ENCODE measurements at regions of chr1 and their contacts with region 1.

Region 1: DNA sequence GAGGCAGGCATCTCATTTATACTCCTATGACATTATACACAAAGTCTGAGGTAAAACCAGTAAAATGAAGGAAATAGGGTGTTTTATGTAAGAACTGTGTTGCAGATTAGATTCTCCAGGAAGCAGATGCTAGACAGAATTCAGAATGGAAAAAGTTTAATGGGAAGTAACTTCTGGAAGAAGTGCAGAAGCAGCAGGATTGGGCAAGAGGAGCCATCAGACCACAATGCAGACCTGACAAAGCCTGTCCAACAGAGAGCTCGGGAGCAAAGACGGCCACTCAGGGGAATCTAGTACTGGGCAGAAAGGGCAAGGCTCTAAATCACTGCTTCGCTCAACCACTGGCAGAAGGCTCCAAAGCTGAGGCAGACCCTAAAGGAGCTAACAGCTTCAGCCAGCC is 33.7 kb downstream of the FBXO42 start:
- DNase-seq: no peak
- H3K4me3 ChIP-seq: no peak overlapping the region
- H3K27ac ChIP-seq: no peak overlapping the region
- H3K4me1 ChIP-seq: peaks cover 5% of the 10 kb centered on the region
- CTCF ChIP-seq: no peak

Region 2: DNA sequence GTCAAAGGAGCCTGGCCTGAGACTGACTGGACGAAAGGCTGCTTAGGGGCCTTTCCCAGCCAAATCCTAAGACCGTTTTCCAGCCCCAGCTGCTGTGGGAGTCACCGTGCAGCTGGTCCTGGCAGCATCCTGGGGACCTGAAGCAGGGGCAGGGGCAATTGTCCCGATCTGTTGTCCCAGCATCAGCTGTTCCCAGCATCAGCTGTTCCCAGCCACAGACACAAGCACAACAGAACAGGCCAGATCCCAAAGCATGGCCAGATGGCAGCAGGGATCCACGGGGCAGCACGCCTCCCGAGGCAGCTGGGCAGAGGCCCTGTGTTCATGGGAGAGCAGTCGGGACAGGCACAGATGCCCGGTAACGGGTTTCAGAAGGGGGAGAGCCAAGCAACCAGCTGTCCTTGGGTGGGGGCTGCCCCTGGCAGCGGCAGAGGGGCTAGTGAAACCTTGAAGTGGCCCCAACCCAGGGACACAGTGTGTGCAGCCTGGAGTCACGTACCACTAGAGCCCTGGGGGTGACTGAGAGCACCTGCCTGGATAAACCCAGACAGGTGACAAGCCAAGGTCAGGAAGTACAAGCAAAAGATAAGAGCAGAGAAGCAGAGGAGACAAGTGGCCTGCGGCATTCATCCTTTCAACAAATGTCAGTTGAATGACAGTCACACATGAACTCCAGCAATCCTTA is 829.4 kb before region 1 on chr1:
- CTCF ChIA-PET with region 1: no interaction called
- POLR2A ChIA-PET with region 1: no interaction called
- intact Hi-C with region 1: no loop called
- DNase-seq: no peak
- H3K4me3 ChIP-seq: no peak overlapping the region
- H3K27ac ChIP-seq: no peak overlapping the region
- H3K4me1 ChIP-seq: no peaks in the 10 kb centered on the region
- CTCF ChIP-seq: no peak

Region 3: GRCh38 chr1:16249596-16250241 is 68.8 kb before region 1 on chr1:
- CTCF ChIA-PET with region 1: no interaction called
- POLR2A ChIA-PET with region 1: no interaction called
- intact Hi-C with region 1: loop called (anchors 10 kb)
- DNase-seq: no peak
- H3K4me3 ChIP-seq: no peak overlapping the region
- H3K27ac ChIP-seq: peak overlapping the region; percentile 47
- H3K4me1 ChIP-seq: peaks cover 20% of the 10 kb centered on the region
- CTCF ChIP-seq: no peak

Region 4: GRCh38 chr1:16300436-16300835 is 18.1 kb before region 1 on chr1:
- CTCF ChIA-PET with region 1: no interaction called
- POLR2A ChIA-PET with region 1: no interaction called
- intact Hi-C with region 1: no loop called
- DNase-seq: no peak
- H3K4me3 ChIP-seq: no peak overlapping the region
- H3K27ac ChIP-seq: no peak overlapping the region
- H3K4me1 ChIP-seq: no peaks in the 10 kb centered on the region
- CTCF ChIP-seq: no peak

Measured in OCI-LY7 (cell line).